Left ventricle myocardium superior (tissue), 1 donor: ENCODE measurements at regions of chr1 and their contacts with region 1.

Region 1: DNA sequence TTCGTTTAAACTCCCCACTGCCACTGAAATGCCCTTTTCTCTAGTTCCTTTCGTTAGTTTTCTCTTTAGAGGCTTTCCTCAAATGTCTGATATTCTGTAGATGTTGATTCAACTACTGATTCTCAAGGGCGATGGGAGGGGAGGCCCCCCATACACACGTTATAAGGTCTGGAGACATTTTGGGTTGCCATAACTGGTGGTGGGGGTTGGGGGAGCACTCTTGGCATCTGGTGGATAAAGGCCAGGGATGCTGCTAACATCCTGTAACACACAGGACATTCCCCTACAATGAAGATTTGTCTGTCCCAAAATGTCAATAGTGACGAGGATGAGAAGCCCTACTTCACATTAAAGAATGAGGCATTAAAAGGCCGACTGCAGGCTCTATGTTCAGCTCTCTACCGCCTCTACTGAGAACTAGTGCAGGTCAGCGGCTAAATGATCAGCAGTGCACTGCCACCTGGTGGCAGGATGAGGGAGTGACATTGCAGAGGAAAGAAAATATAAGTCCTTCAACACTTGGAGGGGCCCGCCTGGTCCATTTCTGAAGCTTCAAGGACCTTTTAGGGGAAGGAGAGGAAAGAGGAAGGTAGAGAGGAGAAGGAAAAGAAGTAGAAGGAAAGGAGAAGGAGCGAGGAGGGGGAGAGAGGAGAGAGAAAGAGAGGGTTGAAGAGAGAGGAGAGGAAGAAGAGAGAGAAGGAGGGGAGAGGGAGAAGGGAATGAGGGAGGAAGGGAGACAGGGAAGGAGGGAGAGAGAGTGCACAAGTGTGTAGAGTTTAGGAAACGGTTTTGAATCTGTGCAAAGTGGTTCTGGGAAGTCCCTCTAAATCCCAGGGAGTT is 29.4 kb downstream of the ALG14 start:
- DNase-seq: peak; percentile 85
- ATAC-seq: peak; percentile 85

Region 2: GRCh38 chr1:94854458-94855306 is 188.7 kb before region 1 on chr1:
- intact Hi-C with region 1: loop called (anchors 2 kb)
- DNase-seq: peak; percentile 88
- ATAC-seq: peak; percentile 95

Region 3: GRCh38 chr1:95154096-95154495 is 110.7 kb after region 1 on chr1:
- intact Hi-C with region 1: no loop called
- DNase-seq: no peak
- ATAC-seq: no peak